ENCODE measurements at regions of chr10 and their contacts with region 1.

Region 1: DNA sequence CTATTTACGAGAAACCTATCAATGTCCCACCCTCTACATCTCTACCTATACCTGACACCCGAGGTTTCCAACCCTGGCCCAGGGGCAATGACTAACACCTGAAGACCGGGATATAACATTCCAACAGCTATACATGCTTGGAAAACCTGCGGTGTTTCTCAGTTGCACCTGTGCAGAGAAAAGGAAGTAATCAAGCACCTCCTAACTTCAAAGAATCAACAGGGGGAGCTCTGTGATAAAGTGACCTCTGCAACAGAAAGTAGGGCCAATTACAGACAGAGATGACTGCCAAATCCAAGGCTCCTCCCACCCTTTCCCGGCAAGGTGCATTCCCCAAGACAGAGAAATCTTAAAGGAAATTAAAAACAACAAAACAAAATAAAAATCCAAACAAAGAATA is 41.3 kb downstream of the CCDC6 start:
- DNase-seq: no peak
- ATAC-seq: peak; percentile 91
- H3K4me3 ChIP-seq: no peak overlapping the region
- H3K27ac ChIP-seq: no peak overlapping the region
- H3K4me1 ChIP-seq: peaks cover 7% of the 10 kb centered on the region
- H3K27me3 ChIP-seq: no peaks in the 10 kb centered on the region
- CTCF ChIP-seq: peak; percentile 54 to 75 (median 58)
- EP300 ChIP-seq: no peak
- POLR2A ChIP-seq: no peak
- RAD21 ChIP-seq: peak; percentile 90

Region 2: DNA sequence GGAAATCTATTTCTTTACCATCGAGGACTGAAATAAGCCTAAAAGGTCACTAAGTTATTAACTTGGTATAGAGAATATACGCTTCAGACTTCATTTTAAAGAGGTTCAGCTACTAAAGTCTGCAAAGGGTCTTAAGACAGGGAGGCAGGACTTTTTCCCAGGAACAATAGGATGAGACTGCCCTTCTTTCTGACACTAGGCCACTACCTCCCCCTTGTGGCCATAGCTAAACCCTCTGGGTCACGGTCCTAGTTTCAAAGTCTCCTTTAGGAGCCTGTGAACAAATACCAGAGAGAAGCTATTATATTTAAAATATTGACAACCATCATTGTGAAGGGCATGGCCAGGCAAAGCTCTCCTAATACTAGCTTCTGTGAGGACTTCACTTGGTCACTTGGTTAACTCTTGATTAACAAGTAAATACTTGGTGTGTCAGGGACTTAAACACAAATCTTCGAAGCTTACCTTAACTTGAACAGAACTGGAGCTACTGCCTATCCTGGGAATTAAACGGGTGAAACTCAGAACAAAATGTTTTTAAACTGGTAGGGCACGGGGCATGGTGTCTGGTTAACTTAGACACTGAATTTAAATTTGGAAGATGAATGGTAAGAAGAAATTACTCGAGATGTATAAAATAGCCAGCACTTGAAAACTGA is 34.4 kb before region 1 on chr10:
- CTCF ChIA-PET with region 1: interaction called, 19 read pairs
- POLR2A ChIA-PET with region 1: interaction called, 3 read pairs
- RAD21 ChIA-PET with region 1: interaction called, 3 read pairs
- SMC1A ChIA-PET with region 1: interaction called, 17 read pairs
- in situ Hi-C with region 1: no loop called
- intact Hi-C with region 1: no loop called
- DNase-seq: no peak
- ATAC-seq: peak; percentile 53
- H3K4me3 ChIP-seq: no peak overlapping the region
- H3K27ac ChIP-seq: no peak overlapping the region
- H3K4me1 ChIP-seq: peaks cover 34% of the 10 kb centered on the region
- H3K27me3 ChIP-seq: no peaks in the 10 kb centered on the region
- CTCF ChIP-seq: peak; percentile 49 to 71 (median 61)
- EP300 ChIP-seq: no peak
- POLR2A ChIP-seq: no peak
- RAD21 ChIP-seq: peak; percentile 55

Region 3: DNA sequence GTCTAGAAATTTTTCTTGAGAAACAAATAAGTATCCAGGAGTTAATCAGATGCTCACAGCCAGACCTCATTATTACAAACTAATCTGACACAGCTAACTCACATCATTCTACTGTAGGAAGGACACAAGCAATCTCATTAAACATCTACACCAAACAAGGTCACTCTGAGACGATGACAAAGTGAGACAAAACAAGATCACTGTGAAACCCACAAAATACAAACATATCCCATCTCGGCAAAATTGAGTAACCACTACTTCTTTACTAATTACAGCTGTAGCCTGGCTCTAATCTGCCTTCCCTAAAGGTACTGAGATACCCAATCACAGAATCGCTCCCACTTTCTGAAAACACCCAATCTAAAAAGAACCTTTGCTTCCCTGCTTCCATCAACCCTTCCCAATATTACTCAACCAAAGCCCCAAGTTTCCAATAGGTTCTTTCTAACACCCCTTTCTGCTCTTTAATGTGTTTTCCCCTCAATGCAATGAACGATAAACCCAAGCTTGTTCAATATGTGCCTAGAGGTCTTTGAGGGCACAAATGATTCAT is 14.3 kb after region 1 on chr10:
- CTCF ChIA-PET with region 1: interaction called, 33 read pairs
- POLR2A ChIA-PET with region 1: no interaction called
- RAD21 ChIA-PET with region 1: interaction called, 17 read pairs
- SMC1A ChIA-PET with region 1: interaction called, 19 read pairs
- in situ Hi-C with region 1: no loop called
- intact Hi-C with region 1: no loop called
- DNase-seq: no peak
- ATAC-seq: peak; percentile 54
- H3K4me3 ChIP-seq: peak overlapping the region; percentile 46; the same call in 1 of the 2 replicates
- H3K27ac ChIP-seq: peak overlapping the region; percentile 77
- H3K4me1 ChIP-seq: peaks cover 50% of the 10 kb centered on the region
- H3K27me3 ChIP-seq: no peaks in the 10 kb centered on the region
- CTCF ChIP-seq: no peak
- EP300 ChIP-seq: no peak
- POLR2A ChIP-seq: no peak
- RAD21 ChIP-seq: no peak

Region 4: DNA sequence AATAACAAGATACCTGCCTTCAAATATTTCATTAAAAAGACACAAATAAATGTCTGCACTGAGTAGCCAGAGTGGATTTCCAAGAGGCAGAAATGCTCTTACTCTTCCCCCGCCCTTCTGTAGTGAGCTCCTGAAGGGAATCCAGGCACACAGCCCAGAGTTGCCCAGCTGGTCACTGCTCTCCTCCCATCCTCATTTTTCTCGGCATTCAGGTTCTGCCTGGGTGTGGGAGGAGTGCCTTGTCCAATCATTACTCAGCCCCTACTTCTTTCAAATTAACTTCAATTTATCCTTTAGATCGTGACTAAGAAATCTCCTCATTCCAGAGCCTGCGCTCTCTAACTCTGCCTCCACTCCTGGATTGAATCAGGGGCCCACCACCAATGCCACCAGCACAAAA is 29.0 kb after region 1 on chr10:
- CTCF ChIA-PET with region 1: interaction called, 6 read pairs
- POLR2A ChIA-PET with region 1: no interaction called
- RAD21 ChIA-PET with region 1: interaction called, 4 read pairs
- SMC1A ChIA-PET with region 1: interaction called, 10 read pairs
- in situ Hi-C with region 1: no loop called
- intact Hi-C with region 1: no loop called
- DNase-seq: no peak
- ATAC-seq: no peak
- H3K4me3 ChIP-seq: no peak overlapping the region
- H3K27ac ChIP-seq: no peak overlapping the region
- H3K4me1 ChIP-seq: peaks cover 15% of the 10 kb centered on the region
- H3K27me3 ChIP-seq: no peaks in the 10 kb centered on the region
- CTCF ChIP-seq: no peak
- EP300 ChIP-seq: no peak
- POLR2A ChIP-seq: no peak
- RAD21 ChIP-seq: no peak

Region 5: GRCh38 chr10:59913547-59914237 is 48.6 kb after region 1 on chr10:
- CTCF ChIA-PET with region 1: interaction called, 181 read pairs
- POLR2A ChIA-PET with region 1: no interaction called
- RAD21 ChIA-PET with region 1: interaction called, 140 read pairs
- SMC1A ChIA-PET with region 1: interaction called, 143 read pairs
- in situ Hi-C with region 1: no loop called
- intact Hi-C with region 1: no loop called
- DNase-seq: no peak
- ATAC-seq: no peak
- H3K4me3 ChIP-seq: no peak overlapping the region
- H3K27ac ChIP-seq: no peak overlapping the region
- H3K4me1 ChIP-seq: no peaks in the 10 kb centered on the region
- H3K27me3 ChIP-seq: no peaks in the 10 kb centered on the region
- CTCF ChIP-seq: no peak
- EP300 ChIP-seq: no peak
- POLR2A ChIP-seq: no peak
- RAD21 ChIP-seq: no peak

Region 6: GRCh38 chr10:60023155-60023877 is 158.2 kb after region 1 on chr10:
- CTCF ChIA-PET with region 1: interaction called, 18 read pairs
- POLR2A ChIA-PET with region 1: no interaction called
- RAD21 ChIA-PET with region 1: interaction called, 4 read pairs
- SMC1A ChIA-PET with region 1: no interaction called
- in situ Hi-C with region 1: no loop called
- intact Hi-C with region 1: no loop called
- DNase-seq: no peak
- ATAC-seq: no peak
- H3K4me3 ChIP-seq: no peak overlapping the region
- H3K27ac ChIP-seq: no peak overlapping the region
- H3K4me1 ChIP-seq: no peaks in the 10 kb centered on the region
- H3K27me3 ChIP-seq: no peaks in the 10 kb centered on the region; a peak in 2 of 4 replicates
- CTCF ChIP-seq: no peak
- EP300 ChIP-seq: no peak
- POLR2A ChIP-seq: no peak
- RAD21 ChIP-seq: no peak

Region 7: GRCh38 chr10:60099998-60100747 is 235.1 kb after region 1 on chr10:
- CTCF ChIA-PET with region 1: interaction called, 24 read pairs
- POLR2A ChIA-PET with region 1: no interaction called
- RAD21 ChIA-PET with region 1: no interaction called
- SMC1A ChIA-PET with region 1: interaction called, 4 read pairs
- in situ Hi-C with region 1: no loop called
- intact Hi-C with region 1: no loop called
- DNase-seq: no peak
- ATAC-seq: peak; percentile 73
- H3K4me3 ChIP-seq: no peak overlapping the region
- H3K27ac ChIP-seq: no peak overlapping the region
- H3K4me1 ChIP-seq: peaks cover 9% of the 10 kb centered on the region
- H3K27me3 ChIP-seq: no peaks in the 10 kb centered on the region
- CTCF ChIP-seq: peak; percentile 51 to 55 (median 54); a peak in 5 of 6 replicates
- EP300 ChIP-seq: no peak
- POLR2A ChIP-seq: no peak
- RAD21 ChIP-seq: peak; percentile 66